Mucosa of descending colon (tissue), 3 donors: ENCODE measurements at regions of chr4 and their contacts with region 1.

Region 1: GRCh38 chr4:110049951-110050925 is 137.6 kb downstream of the EGF start:
- DNase-seq: peak in 1 of 3 donors; percentile 72
- ATAC-seq: peak; percentile 61
- H3K4me3 ChIP-seq: no peak overlapping the region
- H3K4me1 ChIP-seq: peaks cover 1% of the 10 kb centered on the region
- CTCF ChIP-seq: peak; percentile 44

Region 2: GRCh38 chr4:110201502-110201901 is 151.3 kb after region 1 on chr4:
- intact Hi-C with region 1: loop called in 1 of 2 experiments (anchors 10 kb)
- DNase-seq: no peak
- ATAC-seq: no peak
- H3K4me3 ChIP-seq: no peak overlapping the region
- H3K4me1 ChIP-seq: no peaks in the 10 kb centered on the region
- CTCF ChIP-seq: no peak

Region 3: DNA sequence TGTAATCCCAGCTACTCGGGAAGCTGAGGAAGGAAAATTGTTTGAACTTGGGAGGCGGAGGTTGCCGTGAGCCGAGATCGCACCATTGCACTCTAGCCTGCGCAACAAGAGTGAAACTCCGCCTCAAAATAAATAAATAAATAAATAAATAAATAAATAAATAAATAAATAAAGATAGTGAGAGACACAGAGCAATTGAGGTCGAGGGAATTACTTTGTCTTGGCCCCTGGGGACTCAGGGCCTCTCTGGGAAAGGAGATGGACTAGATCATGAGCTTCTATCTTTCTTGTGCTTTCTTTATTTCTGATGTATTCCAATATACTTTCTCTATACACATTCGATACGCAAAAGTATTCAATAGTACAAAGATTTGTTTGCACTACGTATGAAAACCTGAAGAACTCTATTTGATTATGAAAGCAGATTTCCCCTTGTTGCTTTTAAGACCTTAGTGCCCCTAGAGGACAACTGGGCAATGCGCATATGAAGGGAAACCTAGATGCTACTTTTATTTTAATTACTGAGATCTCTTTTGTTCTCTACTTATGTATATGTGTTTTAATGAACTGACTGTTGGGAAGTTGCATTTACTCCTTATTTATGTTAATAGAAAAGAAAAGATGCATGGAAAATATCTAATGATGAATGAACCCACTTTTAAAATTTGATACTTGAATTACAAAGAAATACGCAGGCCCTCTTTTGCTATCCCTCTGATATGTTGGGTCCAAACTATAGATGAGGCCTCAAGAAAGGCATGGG is 160.9 kb after region 1 on chr4:
- intact Hi-C with region 1: loop called (anchors 10 kb)
- DNase-seq: peak in 1 of 3 donors; percentile 58
- ATAC-seq: peak; percentile 65
- H3K4me3 ChIP-seq: no peak overlapping the region
- H3K4me1 ChIP-seq: no peaks in the 10 kb centered on the region
- CTCF ChIP-seq: peak; percentile 77